ENCODE measurements at regions of chr14 and their contacts with region 1.

Region 1: DNA sequence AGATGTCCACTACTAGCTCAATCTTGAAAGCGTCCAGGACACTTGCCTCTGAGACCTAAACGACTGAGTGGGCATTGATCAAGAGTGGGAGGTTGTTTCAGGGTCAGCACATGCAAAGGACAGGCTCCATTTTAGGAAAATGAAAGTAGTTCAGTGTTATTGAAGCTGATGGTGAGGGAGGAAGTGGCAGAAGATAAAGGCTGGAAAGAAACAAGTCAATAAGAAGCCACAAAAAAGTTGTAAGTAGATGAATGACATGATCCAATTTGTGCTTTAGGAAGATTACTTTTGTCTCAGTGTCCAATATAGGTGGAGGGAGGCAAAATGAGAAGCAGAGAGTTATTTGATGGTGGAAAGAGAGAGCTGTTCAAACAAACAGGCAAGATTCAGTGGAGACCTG is 22.0 kb downstream of the GPR65 start:
- DNase-seq: peak; percentile 67
- H3K4me3 Mint-ChIP-seq: peak overlapping the region; percentile 57
- H3K27ac Mint-ChIP-seq: peak overlapping the region; percentile 82
- H3K4me1 Mint-ChIP-seq: peaks cover 63% of the 10 kb centered on the region
- H3K27me3 Mint-ChIP-seq: no peaks in the 10 kb centered on the region

Region 2: DNA sequence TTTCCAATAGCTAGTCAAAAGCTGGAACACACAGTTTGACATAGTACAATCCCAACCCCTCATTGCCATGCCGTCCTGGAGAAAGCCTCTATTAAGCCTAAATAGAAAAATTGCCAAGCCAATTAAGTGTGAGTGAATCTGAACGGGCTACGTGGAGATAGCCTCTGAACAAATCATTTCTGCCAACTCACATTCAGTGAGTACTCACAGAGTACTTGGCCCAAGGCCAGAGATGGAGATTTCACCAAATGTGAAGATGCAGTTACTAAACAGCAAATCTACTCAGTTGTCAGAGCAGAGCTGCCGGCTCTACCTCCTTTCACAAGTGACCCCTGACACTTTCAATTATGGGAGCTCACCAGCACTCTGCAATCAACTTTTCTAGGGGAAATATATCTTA is 383.9 kb before region 1 on chr14:
- intact Hi-C with region 1: no loop called
- DNase-seq: no peak
- H3K4me3 Mint-ChIP-seq: no peak overlapping the region
- H3K27ac Mint-ChIP-seq: no peak overlapping the region
- H3K4me1 Mint-ChIP-seq: no peaks in the 10 kb centered on the region
- H3K27me3 Mint-ChIP-seq: no peaks in the 10 kb centered on the region

Region 3: DNA sequence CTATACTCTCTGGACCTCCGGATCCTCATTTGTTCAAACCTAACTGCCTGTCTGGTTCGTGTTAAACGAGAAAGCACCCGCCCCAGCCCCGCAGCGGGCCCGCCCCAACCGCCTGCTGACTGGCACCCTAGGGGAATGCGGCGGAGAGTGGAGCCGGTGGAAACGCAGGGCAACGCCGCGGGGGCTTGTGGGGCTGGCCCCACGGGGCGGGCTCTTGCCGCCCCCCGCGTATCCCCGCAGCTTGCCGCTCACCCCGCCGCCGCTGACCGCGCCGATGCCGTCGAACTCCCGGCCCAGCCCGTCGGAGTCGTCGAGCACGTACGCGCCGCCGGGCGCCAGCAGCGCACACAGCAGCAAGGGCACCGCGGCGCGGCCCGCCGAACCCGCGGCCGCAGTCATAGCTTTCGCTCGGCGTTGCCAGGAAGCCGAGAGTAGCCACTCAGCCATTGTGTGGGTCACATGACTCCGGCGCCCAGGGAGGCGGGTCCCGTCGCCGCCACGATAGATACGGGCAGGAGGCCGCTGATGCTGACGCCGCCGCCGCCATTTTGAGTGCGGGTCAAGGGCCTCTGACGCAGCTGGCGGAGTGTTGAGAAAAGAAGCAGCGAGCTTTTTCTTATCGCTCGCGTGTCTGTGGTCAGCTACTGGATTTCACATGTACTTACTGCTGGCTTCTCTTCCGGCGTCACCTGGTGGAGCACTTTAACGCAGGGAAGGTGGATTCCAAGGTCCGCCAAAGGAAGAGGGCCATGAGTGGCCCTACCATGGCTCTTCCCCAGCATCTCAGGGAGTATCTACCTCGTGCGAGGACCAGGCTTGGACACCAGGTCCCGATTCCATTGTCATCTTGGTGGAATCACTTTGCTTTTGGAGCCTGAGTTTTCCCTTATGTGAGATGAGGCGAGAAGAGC is 33.9 kb before region 1 on chr14 and contains the start of gene GALC:
- intact Hi-C with region 1: loop called (anchors 2 kb)
- DNase-seq: peak; percentile 98
- H3K4me3 Mint-ChIP-seq: peak within 1 kb of the TSS; percentile 88
- H3K27ac Mint-ChIP-seq: peak within 1 kb of the TSS; percentile 94
- H3K4me1 Mint-ChIP-seq: peaks cover 55% of the 10 kb centered on the region
- H3K27me3 Mint-ChIP-seq: no peaks in the 10 kb centered on the region
- total RNA-seq, gene GALC: 7.3 and 9.3 TPM in 2 replicates

Region 4: DNA sequence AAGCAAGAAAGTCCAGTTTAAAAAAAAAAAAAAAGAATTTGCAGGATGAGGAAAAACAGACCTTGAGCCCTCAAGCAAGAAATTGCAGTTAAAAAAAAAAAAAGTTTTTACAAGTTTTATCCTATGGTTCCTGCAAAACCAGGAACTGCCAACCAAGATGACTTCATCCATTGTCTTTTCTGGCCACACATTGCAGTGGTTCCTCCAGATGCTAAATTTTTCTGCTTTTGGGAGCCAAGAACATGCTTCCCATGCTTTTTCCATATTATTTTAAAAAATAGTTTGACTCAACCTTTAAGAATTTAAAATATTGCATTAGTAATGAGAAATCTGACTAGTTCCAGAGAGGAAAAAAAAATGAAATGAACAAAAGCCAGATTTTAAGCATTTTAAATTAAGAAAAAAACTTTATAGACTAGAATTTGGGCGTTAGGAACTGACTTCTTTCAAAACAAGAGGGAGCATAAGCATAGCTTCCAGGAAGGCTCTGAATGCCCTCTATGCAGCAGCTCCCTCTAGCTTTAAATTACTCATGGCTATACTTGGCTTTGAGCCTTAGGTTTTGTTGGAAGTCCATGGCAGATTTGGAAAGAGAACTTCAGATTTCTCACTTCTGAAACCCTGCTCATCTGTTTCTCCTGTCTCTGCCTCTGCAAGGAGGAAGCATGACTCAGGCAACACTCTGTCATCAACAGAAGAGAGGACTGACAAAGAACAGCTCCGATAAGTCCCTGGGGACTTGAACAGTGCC is 102.6 kb after region 1 on chr14:
- intact Hi-C with region 1: no loop called
- DNase-seq: no peak
- H3K4me3 Mint-ChIP-seq: peak overlapping the region; percentile 39
- H3K27ac Mint-ChIP-seq: no peak overlapping the region
- H3K4me1 Mint-ChIP-seq: peaks cover 6% of the 10 kb centered on the region
- H3K27me3 Mint-ChIP-seq: peaks cover 17% of the 10 kb centered on the region

Measured in activated CD4-positive, alpha-beta T cell treated with anti-CD3 and anti-CD28 coated beads, Interleukin-2, amount 10 ng/mL, durations not matched to agents 24 days and 14 days (primary cell).